ENCODE measurements at regions of chr12 and their contacts with region 1.

Region 1: DNA sequence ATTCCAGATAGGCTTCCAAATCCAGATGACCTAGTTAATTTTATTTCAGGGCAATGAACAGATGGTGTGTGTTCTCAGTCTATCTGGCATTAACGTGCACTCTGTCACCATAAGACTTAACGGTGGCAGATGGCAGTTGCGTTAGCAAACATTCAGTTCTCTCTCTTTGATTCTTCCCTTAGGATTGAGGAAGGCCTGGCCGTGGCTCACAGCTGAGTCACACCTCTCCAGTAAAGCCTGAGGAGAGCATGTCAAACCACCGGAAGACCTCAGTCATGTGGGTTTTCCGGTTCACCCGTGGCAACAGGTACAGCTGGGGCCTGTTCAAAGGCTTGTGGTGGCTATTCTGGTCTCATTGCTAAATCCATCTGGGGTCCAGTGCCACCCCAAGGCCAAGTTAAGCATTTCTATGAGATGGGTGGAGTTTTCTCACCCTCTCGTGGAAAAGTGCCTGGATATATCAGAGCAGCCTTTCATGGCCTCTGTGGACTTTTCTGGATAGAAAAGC is 545.1 kb upstream of the ATP2B1 start:
- DNase-seq: peak; percentile 81 to 92
- ATAC-seq: peak; percentile 96 to 100 (median 98)
- H3K4me3 ChIP-seq: peak overlapping the region; percentile 9
- H3K27ac ChIP-seq: peak overlapping the region; percentile 73
- H3K4me1 ChIP-seq: peaks cover 42% of the 10 kb centered on the region
- H3K27me3 ChIP-seq: no peaks in the 10 kb centered on the region
- CTCF ChIP-seq: peak; percentile 41

Region 2: GRCh38 chr12:89907659-89908058 is 346.1 kb before region 1 on chr12:
- intact Hi-C with region 1: no loop called
- DNase-seq: no peak
- ATAC-seq: no peak
- H3K4me3 ChIP-seq: no peak overlapping the region
- H3K27ac ChIP-seq: no peak overlapping the region
- H3K4me1 ChIP-seq: no peaks in the 10 kb centered on the region
- H3K27me3 ChIP-seq: no peaks in the 10 kb centered on the region
- CTCF ChIP-seq: no peak

Region 3: GRCh38 chr12:90028635-90029051 is 225.1 kb before region 1 on chr12:
- intact Hi-C with region 1: loop called in 1 of 2 experiments (anchors 5 kb)
- DNase-seq: no peak
- ATAC-seq: peak in 3 of 4 donors; percentile 41 to 76 (median 68)
- H3K4me3 ChIP-seq: no peak overlapping the region
- H3K27ac ChIP-seq: peak overlapping the region; percentile 78
- H3K4me1 ChIP-seq: peaks cover 15% of the 10 kb centered on the region
- H3K27me3 ChIP-seq: no peaks in the 10 kb centered on the region
- CTCF ChIP-seq: no peak